Activated CD4-positive, alpha-beta memory T cell treated with anti-CD3 and anti-CD28 coated beads for 36 hours (primary cell): ENCODE measurements at regions of chr10 and their contacts with region 1.

Region 1: GRCh38 chr10:110210674-110211464 is 3.5 kb downstream of the MXI1 start:
- DNase-seq: peak; percentile 96
- H3K4me3 Mint-ChIP-seq: peak overlapping the region; percentile 96
- H3K27ac Mint-ChIP-seq: peak overlapping the region; percentile 91
- H3K4me1 Mint-ChIP-seq: peaks cover 54% of the 10 kb centered on the region
- H3K27me3 Mint-ChIP-seq: peaks cover 1% of the 10 kb centered on the region

Region 2: DNA sequence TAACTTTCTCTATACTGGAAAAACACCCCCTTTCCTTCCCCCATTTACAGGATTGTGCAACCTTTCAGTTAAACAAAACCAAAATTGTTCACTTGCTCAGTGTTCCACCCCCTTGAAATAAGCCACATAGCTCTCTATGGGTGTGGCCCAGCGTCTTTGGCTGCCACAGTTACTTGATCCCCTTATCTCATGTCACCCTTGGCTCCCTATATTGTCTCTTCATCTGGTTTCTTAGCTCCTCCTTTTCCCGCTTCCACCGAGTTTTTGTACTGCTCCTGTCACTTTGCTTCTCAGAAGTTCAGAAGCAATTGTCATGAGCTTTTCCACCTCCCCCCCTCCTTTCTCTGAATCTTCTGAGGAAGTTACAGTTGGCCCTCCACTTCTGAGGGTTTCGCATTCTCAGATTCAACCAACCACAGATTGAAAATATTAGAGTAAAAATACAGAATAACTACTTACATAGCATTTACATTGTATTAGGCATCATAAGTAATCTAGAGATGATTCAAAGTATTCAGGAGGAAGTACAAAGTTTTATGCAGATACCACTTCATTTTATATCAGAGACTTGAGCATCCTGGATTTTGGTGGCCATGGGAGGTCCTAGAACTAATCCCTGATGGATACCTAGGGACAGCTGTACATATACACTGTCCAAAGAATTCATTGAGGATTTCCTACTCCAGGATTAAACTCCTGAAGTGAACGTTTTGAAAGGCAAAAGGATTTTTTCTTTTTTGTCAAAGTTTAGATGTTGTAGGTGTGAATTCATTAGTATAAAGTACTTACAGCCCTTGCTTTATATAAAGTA is 142.7 kb before region 1 on chr10:
- CTCF ChIA-PET with region 1: no interaction called
- POLR2A ChIA-PET with region 1: no interaction called
- intact Hi-C with region 1: loop called (anchors 2 kb)
- DNase-seq: peak; percentile 72
- H3K4me3 Mint-ChIP-seq: peak overlapping the region; percentile 31
- H3K27ac Mint-ChIP-seq: peak overlapping the region; percentile 88
- H3K4me1 Mint-ChIP-seq: peaks cover 83% of the 10 kb centered on the region
- H3K27me3 Mint-ChIP-seq: no peaks in the 10 kb centered on the region

Region 3: GRCh38 chr10:110144507-110144906 is 66.4 kb before region 1 on chr10:
- CTCF ChIA-PET with region 1: interaction called, 6 read pairs
- POLR2A ChIA-PET with region 1: interaction called, 11 read pairs
- intact Hi-C with region 1: no loop called
- DNase-seq: no peak
- H3K4me3 Mint-ChIP-seq: no peak overlapping the region
- H3K27ac Mint-ChIP-seq: no peak overlapping the region
- H3K4me1 Mint-ChIP-seq: peaks cover 19% of the 10 kb centered on the region
- H3K27me3 Mint-ChIP-seq: peaks cover 7% of the 10 kb centered on the region

Region 4: GRCh38 chr10:110225756-110226542 is 15.1 kb after region 1 on chr10:
- CTCF ChIA-PET with region 1: interaction called, 197 read pairs
- POLR2A ChIA-PET with region 1: interaction called, 187 read pairs
- intact Hi-C with region 1: loop called (anchors 1 kb)
- DNase-seq: peak; percentile 92
- H3K4me3 Mint-ChIP-seq: peak overlapping the region; percentile 98
- H3K27ac Mint-ChIP-seq: peak overlapping the region; percentile 96
- H3K4me1 Mint-ChIP-seq: peaks cover 41% of the 10 kb centered on the region
- H3K27me3 Mint-ChIP-seq: no peaks in the 10 kb centered on the region

Region 5: DNA sequence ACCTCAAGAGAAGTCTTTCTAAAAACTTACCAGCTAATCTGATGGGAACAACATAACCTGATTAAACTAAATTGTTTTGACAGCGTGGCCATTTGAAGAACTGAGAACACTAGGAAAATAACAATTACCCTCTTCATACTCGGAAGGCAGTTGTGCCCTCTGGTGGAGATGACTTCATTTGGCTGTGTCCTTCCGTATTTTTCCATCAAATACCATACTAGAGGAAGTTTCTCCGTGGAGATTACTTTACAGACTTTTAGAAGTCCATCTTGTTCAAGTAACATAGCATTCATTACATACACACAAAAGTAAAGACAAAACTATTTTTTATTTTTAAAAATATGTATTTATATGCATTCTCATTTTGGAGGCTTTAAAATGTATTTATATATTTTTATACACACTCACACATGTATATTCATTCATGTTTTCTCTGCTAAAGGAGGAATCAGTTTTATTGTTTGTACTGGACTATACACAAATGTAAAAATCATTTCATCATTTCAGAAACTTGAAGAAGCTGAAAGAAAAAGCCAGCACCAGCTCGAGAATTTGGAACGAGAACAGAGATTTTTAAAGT is 68.6 kb after region 1 on chr10:
- CTCF ChIA-PET with region 1: interaction called, 142 read pairs
- POLR2A ChIA-PET with region 1: no interaction called
- intact Hi-C with region 1: loop called (anchors 1 kb)
- DNase-seq: peak; percentile 54
- H3K4me3 Mint-ChIP-seq: no peak overlapping the region
- H3K27ac Mint-ChIP-seq: no peak overlapping the region
- H3K4me1 Mint-ChIP-seq: peaks cover 19% of the 10 kb centered on the region
- H3K27me3 Mint-ChIP-seq: no peaks in the 10 kb centered on the region

Region 6: GRCh38 chr10:110567201-110568054 is 356.6 kb after region 1 on chr10 and contains the start of gene SMC3:
- CTCF ChIA-PET with region 1: interaction called, 3 read pairs
- POLR2A ChIA-PET with region 1: no interaction called
- intact Hi-C with region 1: loop called (anchors 2 kb)
- DNase-seq: peak; percentile 94
- H3K4me3 Mint-ChIP-seq: peak within 1 kb of the TSS; percentile 93
- H3K27ac Mint-ChIP-seq: peak within 1 kb of the TSS; percentile 97
- H3K4me1 Mint-ChIP-seq: peaks cover 43% of the 10 kb centered on the region
- H3K27me3 Mint-ChIP-seq: peaks cover 10% of the 10 kb centered on the region
- total RNA-seq, gene SMC3: 89.5 to 92.2 TPM